Gastrocnemius medialis (tissue), 4 donors: ENCODE measurements at regions of chr5 and their contacts with region 1.

Region 1: DNA sequence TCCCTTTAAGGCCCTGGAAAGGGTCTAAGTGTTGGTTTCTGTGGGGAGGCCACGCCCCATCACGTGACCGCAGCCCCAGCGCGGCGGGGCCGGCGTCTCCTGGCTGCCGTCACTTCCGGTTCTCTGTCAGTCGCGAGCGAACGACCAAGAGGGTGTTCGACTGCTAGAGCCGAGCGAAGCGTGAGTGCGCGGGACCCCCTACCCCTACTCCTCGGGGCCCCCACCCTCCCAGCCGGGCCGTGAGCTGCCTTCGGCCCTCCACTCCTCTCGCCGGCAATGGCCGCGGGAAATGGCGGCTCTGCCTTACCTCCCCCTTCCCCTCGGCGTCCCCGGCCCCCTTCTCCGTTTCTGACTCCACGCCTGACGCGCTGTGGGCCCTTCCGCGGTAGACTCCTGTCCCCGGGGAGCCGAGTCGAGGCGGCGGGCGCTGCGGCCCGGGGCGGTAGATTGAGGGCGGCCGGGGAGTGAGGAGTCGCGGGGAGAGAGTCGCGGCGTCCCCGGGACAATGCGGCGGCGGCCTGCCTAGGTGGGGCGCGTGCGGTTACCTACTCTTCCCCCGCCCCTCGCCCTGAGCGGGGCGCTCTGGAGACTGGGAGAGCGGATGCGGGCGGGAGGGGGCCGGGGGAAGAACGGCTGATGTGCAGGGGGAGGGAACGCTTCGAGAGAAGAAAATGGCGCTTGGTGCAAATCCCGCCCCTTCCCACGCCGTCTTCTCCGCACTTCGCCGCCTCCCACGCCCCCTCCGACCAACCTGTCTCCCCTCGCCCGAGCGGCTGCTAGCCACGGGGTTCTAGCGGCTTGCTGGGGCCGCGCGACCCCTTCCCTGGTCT is at the start of gene SUB1:
- DNase-seq: peak; percentile 80 to 90
- ATAC-seq: peak; percentile 90 to 95
- H3K4me3 ChIP-seq: peak within 1 kb of the TSS; percentile 81 to 100 (median 98)
- H3K27ac ChIP-seq: peak within 1 kb of the TSS; percentile 96 to 100 (median 100)
- H3K4me1 ChIP-seq: peaks cover 14 to 21% of the 10 kb centered on the region in 2 donors
- H3K27me3 ChIP-seq: no peaks in the 10 kb centered on the region
- CTCF ChIP-seq: no peak
- POLR2A ChIP-seq: peak; percentile 86 to 88
- total RNA-seq, gene SUB1: 82.6 to 162 (median 100) TPM

Region 2: GRCh38 chr5:31531888-31532710 is 1053.6 kb before region 1 on chr5 and contains the starts of genes C5orf22 and DROSHA:
- in situ Hi-C with region 1: loop called in 1 of 4 experiments (anchors 25 kb)
- intact Hi-C with region 1: loop called (anchors 5 kb)
- DNase-seq: peak; percentile 95
- ATAC-seq: peak; percentile 99 to 100
- H3K4me3 ChIP-seq: peak within 1 kb of the TSS; percentile 76 to 97 (median 86)
- H3K27ac ChIP-seq: peak within 1 kb of the TSS; percentile 66 to 92 (median 90)
- H3K4me1 ChIP-seq: peaks cover 21 to 34% of the 10 kb centered on the region in 2 donors
- H3K27me3 ChIP-seq: no peaks in the 10 kb centered on the region
- CTCF ChIP-seq: peak in 2 of 5 experiments; percentile 12
- POLR2A ChIP-seq: peak; percentile 64 to 76
- total RNA-seq, gene C5orf22: 24.1 to 27.0 (median 25.2) TPM
- total RNA-seq, gene DROSHA: 9.2 to 28.8 (median 28.4) TPM

Region 3: DNA sequence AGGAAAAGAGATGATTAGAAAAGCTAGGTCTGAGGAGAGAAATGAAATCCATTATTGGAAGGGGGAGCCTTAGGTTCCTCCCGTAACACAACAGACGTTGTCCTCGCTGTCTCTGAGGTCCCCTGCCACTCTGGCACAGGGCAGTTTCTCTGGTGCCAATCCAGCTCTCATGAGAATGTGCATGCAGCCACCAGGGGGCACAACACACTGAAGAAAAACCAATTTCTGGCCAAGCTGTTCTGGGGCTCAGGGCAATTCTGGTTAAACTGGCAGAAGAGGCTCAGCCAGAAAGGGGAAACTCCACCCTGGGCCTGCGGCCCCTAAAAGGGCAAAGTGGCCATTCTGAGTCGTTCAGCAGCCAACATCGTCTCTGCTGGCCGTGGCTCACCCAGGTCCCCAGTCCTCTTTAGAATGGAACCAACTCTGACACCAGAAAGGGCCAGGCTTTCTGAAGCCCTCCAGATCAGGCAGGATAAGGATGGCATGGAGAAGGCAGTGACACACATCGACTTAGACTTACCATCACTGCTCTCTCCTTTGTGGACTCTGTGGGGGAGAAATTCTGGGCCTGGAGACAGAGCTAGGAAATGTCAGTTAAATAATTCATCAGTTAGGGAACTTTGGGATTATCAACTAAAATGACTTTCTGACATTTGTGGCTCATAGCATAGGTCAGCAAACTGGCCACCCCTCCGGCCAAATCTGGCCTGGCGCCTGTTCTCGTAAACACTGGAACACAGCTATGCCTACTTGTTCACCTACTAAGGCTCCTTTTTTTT is 353.0 kb before region 1 on chr5:
- in situ Hi-C with region 1: loop called in 2 of 4 experiments (anchors 25 kb)
- intact Hi-C with region 1: loop called (anchors 2 kb)
- DNase-seq: peak; percentile 53 to 73
- ATAC-seq: peak; percentile 79 to 94
- H3K4me3 ChIP-seq: no peak overlapping the region
- H3K27ac ChIP-seq: peak overlapping the region; percentile 30 to 62 (median 47)
- H3K4me1 ChIP-seq: peaks cover 19 to 29% of the 10 kb centered on the region in 2 donors
- H3K27me3 ChIP-seq: no peaks in the 10 kb centered on the region
- CTCF ChIP-seq: peak; percentile 69 to 86 (median 81)
- POLR2A ChIP-seq: no peak

Region 4: GRCh38 chr5:32360906-32361305 is 224.8 kb before region 1 on chr5:
- in situ Hi-C with region 1: no loop called
- intact Hi-C with region 1: no loop called
- DNase-seq: no peak
- ATAC-seq: no peak
- H3K4me3 ChIP-seq: no peak overlapping the region
- H3K27ac ChIP-seq: no peak overlapping the region
- H3K4me1 ChIP-seq: no peaks in the 10 kb centered on the region
- H3K27me3 ChIP-seq: no peaks in the 10 kb centered on the region
- CTCF ChIP-seq: no peak
- POLR2A ChIP-seq: no peak

Region 5: GRCh38 chr5:32444431-32445286 is 141.0 kb before region 1 on chr5 and contains the start of gene ZFR:
- in situ Hi-C with region 1: no loop called
- intact Hi-C with region 1: loop called (anchors 1 kb)
- DNase-seq: peak; percentile 88 to 92
- ATAC-seq: peak; percentile 90 to 94
- H3K4me3 ChIP-seq: peak within 1 kb of the TSS; percentile 68 to 88 (median 76)
- H3K27ac ChIP-seq: peak within 1 kb of the TSS; percentile 89 to 97 (median 92)
- H3K4me1 ChIP-seq: peaks cover 26 to 34% of the 10 kb centered on the region in 2 donors
- H3K27me3 ChIP-seq: no peaks in the 10 kb centered on the region
- CTCF ChIP-seq: no peak
- POLR2A ChIP-seq: peak; percentile 85 to 86
- total RNA-seq, gene ZFR: 84.0 to 109 (median 89.4) TPM

Region 6: DNA sequence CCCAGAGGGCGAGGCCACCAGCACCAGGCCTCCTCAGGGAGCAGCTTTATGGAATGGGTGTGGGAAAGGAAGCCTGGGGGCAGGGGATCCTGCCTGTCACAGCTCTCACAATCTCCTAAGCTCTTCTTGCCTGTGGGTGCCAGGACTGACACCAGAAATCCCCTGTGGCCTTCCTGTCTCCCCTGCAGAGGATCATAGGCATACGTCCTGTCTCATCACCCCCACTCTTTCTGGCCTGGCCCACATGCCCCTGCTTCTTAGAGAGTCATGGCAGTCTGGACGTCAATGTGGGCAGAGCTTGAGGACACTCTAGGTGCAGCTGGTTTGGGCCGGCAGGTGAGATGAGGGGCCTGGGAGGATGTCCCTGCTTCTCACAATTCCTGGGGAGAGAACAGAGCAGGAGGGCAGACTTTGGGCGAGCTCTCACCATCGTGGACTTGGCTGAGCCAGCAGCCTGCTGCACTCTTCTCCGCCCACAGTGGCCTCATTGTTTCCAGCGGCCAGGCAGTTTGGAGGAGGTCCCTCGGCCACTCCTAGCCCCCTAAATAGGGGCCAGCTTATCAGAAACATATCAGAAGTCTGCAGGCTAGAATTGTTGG is 73.8 kb before region 1 on chr5:
- in situ Hi-C with region 1: no loop called
- intact Hi-C with region 1: no loop called
- DNase-seq: no peak
- ATAC-seq: no peak
- H3K4me3 ChIP-seq: no peak overlapping the region
- H3K27ac ChIP-seq: no peak overlapping the region
- H3K4me1 ChIP-seq: no peaks in the 10 kb centered on the region
- H3K27me3 ChIP-seq: peaks cover 0 to 3% (median 0%) of the 10 kb centered on the region in 3 donors
- CTCF ChIP-seq: no peak
- POLR2A ChIP-seq: no peak

Region 7: DNA sequence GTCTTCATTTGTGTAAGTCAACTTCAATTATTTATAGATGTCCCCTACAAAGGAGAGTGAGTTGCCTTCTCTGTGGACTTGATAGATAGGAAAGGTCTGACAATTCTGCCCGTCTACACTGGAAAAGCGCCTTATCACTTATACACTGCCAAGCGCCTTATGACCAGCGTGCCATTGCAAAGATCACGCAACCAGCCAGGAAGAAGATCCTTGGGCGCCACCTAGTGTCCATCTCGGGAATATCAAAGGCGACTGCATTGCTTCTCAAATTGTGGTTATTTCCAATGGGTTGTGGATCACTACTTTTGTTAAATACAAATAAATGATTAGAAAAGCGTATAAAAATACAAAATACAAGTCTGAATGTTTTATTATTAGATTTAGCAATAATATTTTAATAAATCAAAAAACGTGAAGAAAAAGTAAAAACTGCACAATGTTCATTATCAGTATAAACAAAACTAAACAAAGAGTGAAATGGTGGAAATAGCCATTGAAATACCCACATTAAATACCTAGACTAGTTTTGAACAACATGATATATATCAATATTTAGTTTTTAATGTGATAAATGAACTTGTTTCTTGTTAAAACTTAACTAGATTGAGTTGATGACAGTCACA is 27.5 kb after region 1 on chr5:
- in situ Hi-C with region 1: no loop called
- intact Hi-C with region 1: loop called (anchors 2 kb)
- DNase-seq: peak; percentile 58 to 74
- ATAC-seq: peak; percentile 82 to 86
- H3K4me3 ChIP-seq: no peak overlapping the region
- H3K27ac ChIP-seq: no peak overlapping the region
- H3K4me1 ChIP-seq: peaks cover 9 to 10% of the 10 kb centered on the region in 2 donors
- H3K27me3 ChIP-seq: no peaks in the 10 kb centered on the region
- CTCF ChIP-seq: peak; percentile 79 to 93 (median 89)
- POLR2A ChIP-seq: no peak

Region 8: DNA sequence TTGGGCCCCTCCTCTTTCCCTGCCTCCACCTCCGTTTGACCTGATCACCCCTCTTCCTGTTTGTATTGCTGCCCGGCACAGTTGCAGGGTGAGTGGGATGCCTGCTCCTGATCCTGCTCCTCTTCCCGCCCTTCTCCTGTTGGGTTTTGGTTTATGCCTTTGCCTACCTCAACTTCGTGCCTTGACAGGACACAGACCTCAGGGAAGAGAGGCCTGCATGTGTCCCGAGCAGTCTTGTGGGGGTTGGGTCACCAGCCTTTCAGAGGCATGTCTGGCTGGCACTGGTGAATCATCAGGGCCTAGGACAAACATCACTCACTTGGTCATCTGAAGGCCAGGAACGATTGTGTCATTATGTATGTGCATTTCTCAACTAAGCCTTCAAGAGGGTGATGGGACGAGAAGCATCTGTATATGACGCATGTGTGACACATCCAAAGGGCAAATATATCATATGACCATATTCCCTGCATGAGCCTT is 182.3 kb after region 1 on chr5:
- in situ Hi-C with region 1: no loop called
- intact Hi-C with region 1: no loop called
- DNase-seq: peak in 1 of 2 donors; percentile 18
- ATAC-seq: peak in 1 of 2 donors; percentile 58
- H3K4me3 ChIP-seq: no peak overlapping the region
- H3K27ac ChIP-seq: no peak overlapping the region
- H3K4me1 ChIP-seq: no peaks in the 10 kb centered on the region
- H3K27me3 ChIP-seq: no peaks in the 10 kb centered on the region
- CTCF ChIP-seq: no peak
- POLR2A ChIP-seq: no peak

Region 9: GRCh38 chr5:32842813-32843530 is 257.3 kb after region 1 on chr5:
- in situ Hi-C with region 1: no loop called
- intact Hi-C with region 1: no loop called
- DNase-seq: no peak
- ATAC-seq: no peak
- H3K4me3 ChIP-seq: no peak overlapping the region
- H3K27ac ChIP-seq: no peak overlapping the region
- H3K4me1 ChIP-seq: no peaks in the 10 kb centered on the region
- H3K27me3 ChIP-seq: no peaks in the 10 kb centered on the region
- CTCF ChIP-seq: no peak
- POLR2A ChIP-seq: no peak